Spleen (tissue), 13 donors: ENCODE measurements at regions of chr1 and their contacts with region 1.

Region 1: GRCh38 chr1:43529206-43529731 is 1.4 kb upstream of the PTPRF start:
- DNase-seq: peak; percentile 93
- H3K4me3 ChIP-seq: no peak overlapping the region
- H3K27ac ChIP-seq: no peak overlapping the region
- H3K4me1 ChIP-seq: peaks cover 0 to 38% (median 19%) of the 10 kb centered on the region in 6 donors
- H3K27me3 ChIP-seq: peaks cover 0 to 49% (median 22%) of the 10 kb centered on the region in 7 donors
- CTCF ChIP-seq: peak; percentile 79 to 97 (median 93)
- POLR2A ChIP-seq: no peak

Region 2: GRCh38 chr1:43650310-43651085 is 121.2 kb after region 1 on chr1:
- intact Hi-C with region 1: loop called (anchors 5 kb)
- DNase-seq: peak; percentile 96
- H3K4me3 ChIP-seq: peak overlapping the region; percentile 60 to 87 (median 72)
- H3K27ac ChIP-seq: peak overlapping the region; percentile 93 to 97 (median 96)
- H3K4me1 ChIP-seq: peaks cover 17 to 59% (median 41%) of the 10 kb centered on the region in 6 donors
- H3K27me3 ChIP-seq: no peaks in the 10 kb centered on the region
- CTCF ChIP-seq: no peak
- POLR2A ChIP-seq: peak; percentile 92 to 97 (median 96)

Region 3: DNA sequence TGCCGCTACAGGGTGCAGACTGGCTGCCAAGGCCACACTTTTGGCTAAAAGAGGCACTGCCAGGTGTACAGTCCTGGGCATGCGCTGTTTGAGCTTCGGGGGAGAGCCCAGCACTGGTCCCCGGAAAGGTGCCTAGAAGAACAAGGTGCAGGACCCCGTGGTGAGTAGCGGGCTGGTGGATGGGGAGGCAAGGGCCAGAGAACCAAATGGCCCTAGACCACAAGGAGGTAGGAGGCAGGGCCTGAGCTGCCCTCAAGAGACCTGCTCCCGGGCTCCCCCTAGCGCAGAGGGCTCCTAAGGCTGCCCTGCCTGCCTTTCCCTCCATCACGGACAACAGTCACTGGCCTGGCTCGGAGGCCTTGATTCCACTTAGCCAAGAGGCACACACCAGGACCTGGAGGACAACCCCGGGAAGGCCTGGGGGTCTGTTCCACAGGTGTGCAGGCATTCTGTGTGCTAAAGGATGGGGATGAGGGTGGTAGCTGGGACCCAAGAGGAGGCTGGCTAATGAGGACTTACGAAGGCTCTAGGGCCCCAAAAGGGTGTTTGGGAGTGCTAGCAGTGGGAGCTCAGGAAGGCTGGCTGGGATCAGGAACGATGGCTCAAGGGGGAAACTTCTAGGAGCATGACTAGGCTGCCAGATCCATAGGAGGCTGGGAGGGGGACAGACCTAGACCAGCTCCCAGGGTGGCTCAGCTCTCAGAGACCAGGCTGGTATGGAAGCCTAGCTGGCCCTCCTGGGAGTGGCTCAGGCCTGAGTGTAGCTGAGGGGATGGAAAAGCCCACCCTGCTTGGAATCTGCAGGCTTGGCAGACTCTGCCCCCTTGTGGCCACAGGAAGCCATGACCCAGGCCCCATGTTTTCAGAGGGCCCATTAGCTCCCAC is 405.1 kb after region 1 on chr1:
- intact Hi-C with region 1: loop called (anchors 10 kb)
- DNase-seq: peak; percentile 87
- H3K4me3 ChIP-seq: peak overlapping the region in 2 of 8 donors; percentile 15 to 52
- H3K27ac ChIP-seq: no peak overlapping the region
- H3K4me1 ChIP-seq: peaks cover 7 to 41% (median 34%) of the 10 kb centered on the region in 6 donors
- H3K27me3 ChIP-seq: peaks cover 0 to 47% (median 31%) of the 10 kb centered on the region in 7 donors
- CTCF ChIP-seq: peak; percentile 65 to 90 (median 76)
- POLR2A ChIP-seq: no peak

Region 4: GRCh38 chr1:44049839-44050238 is 520.6 kb after region 1 on chr1:
- intact Hi-C with region 1: loop called (anchors 10 kb)
- DNase-seq: no peak
- H3K4me3 ChIP-seq: no peak overlapping the region
- H3K27ac ChIP-seq: no peak overlapping the region
- H3K4me1 ChIP-seq: peaks cover 0 to 12% (median 6%) of the 10 kb centered on the region in 6 donors
- H3K27me3 ChIP-seq: no peaks in the 10 kb centered on the region
- CTCF ChIP-seq: no peak
- POLR2A ChIP-seq: no peak